Sigmoid colon (tissue), 7 donors: ENCODE measurements at regions of chr2 and their contacts with region 1.

Region 1: DNA sequence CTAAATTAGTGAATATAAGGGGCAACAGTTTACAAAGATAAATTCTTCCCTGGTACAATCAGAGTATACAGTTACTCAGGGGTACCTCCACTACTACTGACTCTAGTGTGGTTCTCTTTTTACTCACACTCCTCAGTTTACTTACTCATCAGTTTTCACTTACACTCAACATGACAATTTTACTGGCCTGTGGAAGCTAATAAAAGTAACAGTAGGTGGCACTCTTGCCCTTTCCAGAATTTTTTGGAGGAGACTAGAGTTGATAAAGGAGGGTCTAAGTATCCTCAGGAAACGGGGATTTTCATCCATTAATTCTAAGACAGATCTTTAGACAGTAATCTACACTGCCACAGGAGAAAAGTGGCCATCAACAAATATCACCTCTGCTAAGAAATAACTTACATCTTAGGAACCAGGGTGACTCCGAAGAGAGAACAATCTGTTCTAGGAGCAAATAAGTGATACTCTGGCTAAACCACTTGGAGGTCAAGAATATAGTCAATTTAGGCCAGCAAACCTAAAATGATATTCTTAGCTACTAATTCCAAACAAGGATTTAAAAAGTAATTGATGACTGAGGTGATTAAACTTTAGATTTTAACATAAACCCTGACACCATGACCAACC is 61.3 kb downstream of the ATL2 start:
- DNase-seq: no peak
- H3K4me3 ChIP-seq: no peak overlapping the region
- H3K27ac ChIP-seq: peak overlapping the region; percentile 51 to 74 (median 67)
- H3K4me1 ChIP-seq: peaks cover 0 to 29% (median 27%) of the 10 kb centered on the region in 4 donors
- H3K27me3 ChIP-seq: no peaks in the 10 kb centered on the region
- CTCF ChIP-seq: peak; percentile 46 to 75 (median 64)
- EP300 ChIP-seq: peak in 1 of 4 donors; percentile 10
- POLR2A ChIP-seq: no peak

Region 2: DNA sequence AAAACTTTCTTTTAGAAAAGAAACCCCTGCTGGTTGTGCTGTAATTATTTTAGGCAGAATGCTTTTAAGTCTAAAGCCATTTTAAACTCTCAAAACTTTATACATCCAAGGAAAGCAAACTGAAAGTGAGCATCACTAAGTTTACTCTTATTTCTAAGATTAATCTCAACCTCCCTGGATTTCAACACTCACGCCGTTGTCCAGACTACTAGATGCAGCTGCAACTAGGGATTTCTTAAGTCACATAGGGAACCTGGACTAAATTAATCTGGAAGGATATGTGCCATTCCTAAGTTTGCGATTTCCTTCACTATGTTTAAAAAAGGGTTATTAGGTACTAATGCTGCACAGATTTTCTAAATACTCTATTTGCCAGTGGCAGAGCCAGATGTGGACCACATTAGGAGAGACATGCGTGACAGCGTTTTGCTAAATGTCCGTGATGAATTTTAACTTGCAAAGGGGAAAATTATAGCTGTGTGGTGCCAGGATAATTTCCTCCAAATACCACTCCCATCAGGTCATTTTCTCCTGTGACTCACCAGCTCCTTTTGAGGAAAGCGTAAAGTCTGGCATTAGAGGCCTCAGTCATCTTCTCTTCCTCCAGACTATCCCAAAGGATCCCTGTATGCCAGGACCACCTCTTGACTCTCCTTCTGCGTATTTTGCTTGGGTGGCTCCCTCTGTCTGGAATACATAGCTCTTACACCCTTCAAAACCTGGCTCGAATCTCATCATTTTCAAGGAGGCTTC is 82.4 kb before region 1 on chr2:
- intact Hi-C with region 1: no loop called
- DNase-seq: no peak
- H3K4me3 ChIP-seq: no peak overlapping the region
- H3K27ac ChIP-seq: peak overlapping the region in 2 of 4 donors; percentile 28 to 38
- H3K4me1 ChIP-seq: peaks cover 0 to 11% (median 6%) of the 10 kb centered on the region in 4 donors
- H3K27me3 ChIP-seq: no peaks in the 10 kb centered on the region
- CTCF ChIP-seq: no peak
- EP300 ChIP-seq: no peak
- POLR2A ChIP-seq: no peak

Region 3: GRCh38 chr2:38377050-38377828 is 61.4 kb after region 1 on chr2 and contains the start of gene ATL2:
- intact Hi-C with region 1: loop called (anchors 5 kb)
- DNase-seq: peak; percentile 98
- H3K4me3 ChIP-seq: peak within 1 kb of the TSS; percentile 80 to 98 (median 92)
- H3K27ac ChIP-seq: peak within 1 kb of the TSS; percentile 98 to 99 (median 99)
- H3K4me1 ChIP-seq: peaks cover 0 to 44% (median 27%) of the 10 kb centered on the region in 4 donors
- H3K27me3 ChIP-seq: no peaks in the 10 kb centered on the region
- CTCF ChIP-seq: no peak
- EP300 ChIP-seq: peak; percentile 13 to 76 (median 26)
- POLR2A ChIP-seq: peak; percentile 89 to 90
- total RNA-seq, gene ATL2: 176 to 271 (median 205) TPM

Region 4: DNA sequence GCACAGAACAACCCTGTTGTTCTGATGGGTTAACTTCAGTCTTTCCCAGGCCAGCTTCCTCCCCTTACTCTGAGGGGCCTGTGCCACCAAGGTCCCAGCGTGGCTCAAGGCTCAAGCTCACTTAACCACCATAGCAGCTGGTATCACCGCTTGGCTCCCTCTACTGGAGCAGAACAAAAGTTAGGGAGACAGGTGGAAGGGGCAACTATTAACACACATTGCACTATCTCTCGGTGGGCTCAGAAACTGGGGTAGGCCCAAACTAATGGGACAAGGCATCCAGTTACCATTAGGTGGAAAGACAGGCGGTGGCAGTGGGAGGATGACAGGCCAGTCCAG is 149.9 kb after region 1 on chr2:
- intact Hi-C with region 1: loop called (anchors 5 kb)
- DNase-seq: no peak
- H3K4me3 ChIP-seq: no peak overlapping the region
- H3K27ac ChIP-seq: peak overlapping the region; percentile 86 to 91 (median 88)
- H3K4me1 ChIP-seq: peaks cover 0 to 96% (median 73%) of the 10 kb centered on the region in 4 donors
- H3K27me3 ChIP-seq: no peaks in the 10 kb centered on the region
- CTCF ChIP-seq: peak in 1 of 4 experiments; percentile 23
- EP300 ChIP-seq: no peak
- POLR2A ChIP-seq: no peak

Region 5: GRCh38 chr2:38728694-38729093 is 412.9 kb after region 1 on chr2:
- intact Hi-C with region 1: loop called (anchors 5 kb)
- DNase-seq: no peak
- H3K4me3 ChIP-seq: no peak overlapping the region
- H3K27ac ChIP-seq: no peak overlapping the region
- H3K4me1 ChIP-seq: no peaks in the 10 kb centered on the region
- H3K27me3 ChIP-seq: no peaks in the 10 kb centered on the region
- CTCF ChIP-seq: no peak
- EP300 ChIP-seq: no peak
- POLR2A ChIP-seq: no peak

Region 6: DNA sequence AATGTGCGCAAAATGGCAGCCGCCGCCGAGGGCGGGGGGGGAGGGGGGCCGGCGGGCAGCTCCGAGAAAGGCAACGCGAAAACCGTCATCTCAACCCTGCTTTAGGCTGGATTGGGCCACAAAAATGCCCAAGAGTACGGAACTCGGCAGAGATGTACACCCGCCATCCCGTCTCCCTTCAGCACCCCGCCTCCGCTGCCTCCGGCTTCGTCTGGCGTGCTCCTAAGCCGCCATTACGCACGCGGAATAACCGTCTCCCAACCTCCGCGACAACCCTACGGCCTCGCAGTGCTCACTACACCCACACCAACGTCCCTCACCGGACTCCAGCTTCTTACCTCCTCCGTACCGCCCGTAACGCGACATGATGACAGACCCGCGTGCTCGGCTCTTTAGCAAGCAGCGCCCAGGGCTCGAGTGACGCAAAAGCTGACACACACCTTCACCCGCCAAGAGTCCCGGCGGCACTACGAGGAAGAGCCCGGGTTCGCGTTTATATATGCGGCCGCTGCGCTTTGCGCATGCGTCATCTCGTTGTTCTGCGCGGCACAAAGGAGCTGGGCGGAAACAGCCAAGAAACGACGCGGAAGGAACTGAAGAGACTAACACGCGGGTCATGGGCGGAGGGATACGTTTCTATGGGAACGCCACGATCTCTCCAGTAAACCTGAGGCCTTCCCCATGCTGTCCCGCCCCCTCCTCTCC is 435.2 kb after region 1 on chr2 and contains the start of gene SRSF7:
- intact Hi-C with region 1: loop called (anchors 5 kb)
- DNase-seq: peak; percentile 99
- H3K4me3 ChIP-seq: peak within 1 kb of the TSS; percentile 69 to 97 (median 84)
- H3K27ac ChIP-seq: peak within 1 kb of the TSS; percentile 92 to 99 (median 97)
- H3K4me1 ChIP-seq: peaks cover 0 to 45% (median 41%) of the 10 kb centered on the region in 4 donors
- H3K27me3 ChIP-seq: no peaks in the 10 kb centered on the region
- CTCF ChIP-seq: no peak
- EP300 ChIP-seq: peak in 1 of 4 donors; percentile 26
- POLR2A ChIP-seq: peak; percentile 100
- total RNA-seq, gene SRSF7: 73.1 to 140 (median 97.0) TPM